ENCODE measurements at regions of chr1 and their contacts with region 1.

Region 1: DNA sequence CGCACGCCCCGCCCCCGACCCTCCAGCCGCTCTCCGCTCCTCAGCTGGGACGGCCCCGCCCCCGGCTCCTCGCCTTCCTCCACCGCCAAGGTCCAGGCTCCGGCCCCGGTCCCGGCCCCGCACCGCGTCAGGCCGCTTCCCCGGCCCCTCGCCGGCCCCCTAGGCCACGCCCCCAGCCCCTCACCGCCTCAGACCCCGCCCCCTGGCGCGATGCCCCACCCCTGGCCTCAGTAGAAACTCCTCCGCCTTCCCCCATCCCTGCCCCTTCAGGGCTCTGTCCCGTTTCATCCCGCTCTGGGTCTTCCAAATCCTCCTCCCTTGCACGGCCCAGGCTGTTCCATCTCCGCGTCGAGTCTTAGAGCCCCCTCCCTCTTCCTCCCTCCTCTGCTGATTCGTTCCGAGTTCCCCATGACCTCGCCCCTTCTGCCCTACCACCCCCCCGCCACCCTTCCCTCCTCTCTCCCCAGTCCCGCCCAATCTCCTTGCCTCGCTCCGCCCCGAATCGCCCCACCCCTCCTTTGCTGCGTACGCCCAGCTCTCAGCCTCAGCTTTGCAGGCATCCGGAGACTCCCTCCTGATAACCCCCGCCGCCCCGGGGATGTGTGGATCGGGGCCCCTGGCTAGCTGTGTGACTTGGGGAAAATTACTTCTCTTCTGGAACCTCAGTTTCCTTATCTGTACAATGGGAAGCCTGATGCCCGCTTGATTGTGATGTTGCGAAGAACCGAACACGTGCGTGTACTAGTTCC is 448 bp upstream of the ASAP3 start:
- DNase-seq: peak; percentile 94
- H3K4me3 Mint-ChIP-seq: peak overlapping the region; percentile 70
- H3K27ac Mint-ChIP-seq: no peak overlapping the region
- H3K4me1 Mint-ChIP-seq: peaks cover 26% of the 10 kb centered on the region
- H3K27me3 Mint-ChIP-seq: peaks cover 21% of the 10 kb centered on the region

Region 2: GRCh38 chr1:23530747-23531561 is 46.5 kb after region 1 on chr1 and contains the start of gene E2F2:
- CTCF ChIA-PET with region 1: interaction called, 6 read pairs
- POLR2A ChIA-PET with region 1: interaction called, 3 read pairs
- intact Hi-C with region 1: loop called (anchors 2 kb)
- DNase-seq: peak; percentile 89
- H3K4me3 Mint-ChIP-seq: peak within 1 kb of the TSS; percentile 88
- H3K27ac Mint-ChIP-seq: peak within 1 kb of the TSS; percentile 91
- H3K4me1 Mint-ChIP-seq: peaks cover 75% of the 10 kb centered on the region
- H3K27me3 Mint-ChIP-seq: no peaks in the 10 kb centered on the region
- total RNA-seq, gene E2F2: 22.1 to 26.3 TPM

Region 3: GRCh38 chr1:23551849-23552248 is 67.4 kb after region 1 on chr1:
- CTCF ChIA-PET with region 1: no interaction called
- POLR2A ChIA-PET with region 1: no interaction called
- intact Hi-C with region 1: no loop called
- DNase-seq: no peak
- H3K4me3 Mint-ChIP-seq: no peak overlapping the region
- H3K27ac Mint-ChIP-seq: no peak overlapping the region
- H3K4me1 Mint-ChIP-seq: peaks cover 29% of the 10 kb centered on the region
- H3K27me3 Mint-ChIP-seq: no peaks in the 10 kb centered on the region